Posterior cingulate gyrus (tissue), 11 donors: ENCODE measurements at regions of chr2 and their contacts with region 1.

Region 1: DNA sequence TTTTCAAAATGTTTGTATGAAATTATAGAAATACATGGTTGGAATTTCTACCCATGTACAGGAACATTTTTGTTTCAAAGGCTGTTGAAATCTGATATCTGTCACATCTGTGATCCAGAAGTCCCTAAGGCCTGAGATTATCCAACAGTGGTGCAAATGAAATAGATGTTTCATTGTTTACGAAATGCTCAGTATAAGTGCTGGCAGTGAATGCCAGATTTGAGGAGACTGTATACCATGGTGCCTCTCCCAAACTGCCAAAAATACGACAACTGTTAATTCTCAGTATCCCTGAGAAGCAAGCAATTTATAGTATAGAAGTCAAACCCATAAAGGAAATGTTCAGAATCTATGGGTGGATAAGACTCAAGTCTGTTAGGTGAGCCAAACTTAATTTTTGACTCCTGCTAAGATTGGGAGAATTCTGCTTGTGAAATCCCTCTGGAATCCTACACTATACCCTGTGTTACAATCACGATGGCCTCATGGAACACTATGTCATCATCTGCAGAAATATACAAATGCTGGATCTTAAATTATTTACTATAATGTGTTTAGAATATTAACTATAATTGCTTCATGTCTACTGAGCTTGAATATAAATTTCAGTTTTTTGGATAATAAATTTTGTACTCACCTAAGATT is 71.2 kb upstream of the DOCK10 start:
- DNase-seq: no peak

Region 2: DNA sequence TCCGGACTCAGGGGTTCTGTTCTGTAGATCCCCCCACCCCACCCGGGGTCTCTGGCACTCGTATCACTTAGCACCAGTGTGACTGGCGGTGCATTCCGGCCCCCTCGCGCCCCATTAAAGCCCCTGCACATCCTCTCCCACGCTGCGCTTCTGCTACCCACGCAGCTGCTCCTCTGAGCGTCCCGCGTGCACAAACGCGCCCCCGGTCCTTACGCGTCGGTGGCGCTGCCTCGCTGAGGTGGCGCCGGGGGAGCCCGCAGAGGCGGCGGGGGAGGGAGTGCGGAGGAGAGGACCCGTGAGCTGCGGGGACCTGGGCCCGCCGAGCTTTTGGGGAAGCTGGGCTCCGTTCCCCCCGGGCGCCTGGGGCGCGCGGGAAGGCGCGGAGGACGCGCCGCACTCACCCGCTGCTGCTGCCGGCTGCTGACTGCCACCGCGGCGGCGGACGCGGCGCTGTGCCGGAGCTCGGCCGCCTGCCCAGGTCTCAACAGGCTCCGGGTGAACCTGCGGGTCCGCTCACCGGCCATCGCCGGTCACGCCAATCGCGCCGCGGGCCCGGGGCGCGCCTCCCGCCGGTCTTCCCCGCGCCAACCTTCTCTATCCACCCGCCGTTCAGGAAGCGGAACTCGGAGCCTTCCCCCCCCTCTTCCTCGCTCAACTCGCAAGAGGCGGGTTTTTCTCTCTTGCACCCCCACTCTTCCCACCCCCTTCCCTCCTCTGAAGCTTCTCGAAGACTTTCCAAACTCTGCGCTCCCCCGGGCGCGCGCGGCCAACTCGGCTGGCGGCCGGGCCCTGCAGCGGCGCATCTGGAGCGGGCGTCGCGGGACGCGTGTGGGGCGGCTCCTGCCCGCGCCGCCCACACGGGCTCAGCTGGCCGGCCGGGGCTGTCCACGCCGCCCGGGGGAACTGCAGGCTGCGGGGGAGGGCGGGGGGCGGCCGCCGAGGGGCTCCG is 71.4 kb before region 1 on chr2 and contains the start of gene DOCK10:
- intact Hi-C with region 1: loop called (anchors 1 kb)
- DNase-seq: peak; percentile 27 to 93 (median 52)

Region 3: DNA sequence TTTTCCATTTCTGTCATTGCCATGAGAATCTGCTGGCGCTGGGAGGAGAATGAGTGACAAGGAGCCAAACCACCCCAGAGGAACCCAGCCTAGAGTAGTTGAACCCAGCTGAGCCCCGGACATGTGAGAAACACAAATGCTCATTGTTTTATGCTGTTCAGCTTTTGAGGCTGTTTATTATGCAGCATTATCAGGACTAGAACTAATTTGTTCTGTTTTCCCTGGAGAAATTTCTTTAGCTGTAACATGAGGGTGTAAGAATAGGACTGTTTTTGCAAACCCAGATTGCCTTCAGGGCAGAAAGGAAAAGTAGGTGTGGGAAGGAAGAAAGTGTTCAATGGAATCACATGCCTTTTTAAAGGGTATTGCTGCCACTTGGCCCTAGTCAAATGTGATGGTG is 42.7 kb before region 1 on chr2:
- intact Hi-C with region 1: loop called (anchors 2 kb)
- DNase-seq: peak in 8 of 10 donors; percentile 36 to 93 (median 61)

Region 4: DNA sequence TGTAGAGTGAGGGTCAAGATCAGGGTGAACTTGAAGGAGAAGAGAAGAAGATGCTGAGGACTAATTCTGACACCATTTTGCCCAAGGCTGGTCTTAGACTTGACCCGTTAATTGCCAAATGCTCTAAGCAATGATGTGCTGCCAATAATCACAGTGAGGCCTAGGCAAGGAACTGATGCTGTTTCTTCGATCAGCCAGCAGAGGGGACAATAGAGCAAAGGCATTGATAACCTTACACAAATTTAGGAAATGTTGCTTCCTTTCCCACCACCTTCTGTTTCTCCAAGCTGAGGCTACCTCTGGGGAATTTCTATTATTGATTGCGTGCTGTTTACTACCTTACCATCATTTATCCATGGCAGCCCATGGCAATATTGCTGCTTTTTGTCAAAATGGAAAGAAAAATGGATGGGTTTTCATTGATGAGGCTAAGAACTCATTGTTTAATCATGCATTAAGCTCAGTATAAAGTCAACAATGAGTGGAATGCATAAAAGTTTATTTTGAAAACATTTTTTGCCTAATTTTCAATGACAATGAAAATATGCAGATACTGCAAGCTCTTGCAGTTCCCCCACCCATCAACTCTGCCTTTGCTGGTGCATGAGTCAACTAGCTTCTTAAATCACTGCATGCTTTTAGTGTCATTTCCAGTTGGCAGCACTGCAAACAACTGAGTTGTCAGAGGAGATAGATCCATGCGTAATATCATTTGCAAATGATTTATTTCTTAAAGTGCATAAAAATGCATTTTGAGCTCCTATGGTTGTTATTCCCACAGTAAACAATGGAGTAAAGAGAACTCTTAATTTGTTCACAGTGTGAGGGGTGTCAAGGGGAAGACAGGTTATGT is 169.6 kb after region 1 on chr2:
- intact Hi-C with region 1: no loop called
- DNase-seq: peak in 2 of 10 donors; percentile 9 to 49

Region 5: GRCh38 chr2:225756198-225756597 is 642.7 kb after region 1 on chr2:
- intact Hi-C with region 1: no loop called
- DNase-seq: no peak